CD8-positive, alpha-beta T cell (primary cell): ENCODE measurements at regions of chr11 and their contacts with region 1.

Region 1: GRCh38 chr11:14358729-14359439 is at the start of gene RRAS2:
- DNase-seq: peak; percentile 58 to 90 (median 80)
- ATAC-seq: peak; percentile 94
- H3K4me3 ChIP-seq: peak within 1 kb of the TSS; percentile 66 to 70
- H3K4me3 Mint-ChIP-seq: peak within 1 kb of the TSS; percentile 88
- H3K27ac ChIP-seq: peak within 1 kb of the TSS; percentile 19 to 64
- H3K27ac Mint-ChIP-seq: peak within 1 kb of the TSS; percentile 83
- H3K4me1 ChIP-seq: peaks cover 17% of the 10 kb centered on the region
- H3K4me1 Mint-ChIP-seq: peaks cover 35% of the 10 kb centered on the region
- H3K27me3 ChIP-seq: no peaks in the 10 kb centered on the region
- H3K27me3 Mint-ChIP-seq: no peaks in the 10 kb centered on the region
- CTCF ChIP-seq: no peak
- total RNA-seq, gene RRAS2: 38.5 to 40.6 TPM

Region 2: DNA sequence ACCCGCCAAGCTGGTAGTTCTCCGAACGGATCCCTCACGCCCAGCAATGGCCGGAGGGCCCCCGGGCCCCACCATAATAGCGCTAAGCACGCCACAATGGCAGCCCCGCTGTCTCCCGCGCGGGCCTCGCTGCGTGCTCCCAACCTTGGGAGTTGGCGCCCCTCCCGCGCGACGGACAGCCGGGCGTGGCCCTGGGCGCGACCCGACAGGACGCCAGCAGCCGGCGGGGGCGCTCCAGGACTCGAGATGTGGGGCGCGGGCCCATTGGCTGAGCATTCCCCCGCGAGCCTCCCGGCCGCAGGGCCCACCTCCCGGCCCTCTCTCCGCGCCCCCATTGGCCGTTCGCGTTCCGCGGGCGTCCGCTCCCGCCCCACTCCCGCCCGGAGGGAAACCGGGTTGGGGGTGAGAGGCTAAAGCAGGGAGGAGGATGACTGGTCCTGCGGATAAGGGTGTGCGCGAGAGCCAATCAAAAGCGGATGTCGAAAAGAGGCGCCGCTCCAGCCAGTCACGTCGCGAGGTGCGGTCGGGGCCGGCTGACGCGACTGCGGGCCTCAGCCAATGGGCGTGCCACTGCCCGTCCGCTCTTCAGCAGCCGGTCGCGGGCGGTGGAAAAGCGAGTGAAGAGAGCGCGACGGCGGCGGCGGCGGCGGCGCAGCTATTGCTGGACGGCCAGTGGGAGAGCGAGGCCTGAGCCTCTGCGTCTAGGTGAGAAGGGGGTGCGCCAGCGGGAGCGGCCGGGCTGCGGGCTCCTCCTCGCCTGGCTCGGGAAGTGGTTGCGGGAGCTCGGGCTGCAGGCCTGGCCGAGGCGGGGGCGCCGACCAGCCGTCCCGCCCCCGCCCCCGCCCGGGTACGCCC is 690.6 kb before region 1 on chr11 and contains the start of gene FAR1:
- CTCF ChIA-PET with region 1: no interaction called
- POLR2A ChIA-PET with region 1: no interaction called
- intact Hi-C with region 1: loop called (anchors 5 to 10 kb)
- DNase-seq: peak; percentile 92 to 98 (median 95)
- ATAC-seq: peak; percentile 89
- H3K4me3 ChIP-seq: peak within 1 kb of the TSS; percentile 76 to 81
- H3K4me3 Mint-ChIP-seq: peak within 1 kb of the TSS; percentile 98
- H3K27ac ChIP-seq: peak within 1 kb of the TSS; percentile 66 to 69
- H3K27ac Mint-ChIP-seq: peak within 1 kb of the TSS; percentile 96
- H3K4me1 ChIP-seq: peaks cover 14% of the 10 kb centered on the region
- H3K4me1 Mint-ChIP-seq: peaks cover 45% of the 10 kb centered on the region
- H3K27me3 ChIP-seq: no peaks in the 10 kb centered on the region
- H3K27me3 Mint-ChIP-seq: peaks cover 5% of the 10 kb centered on the region
- CTCF ChIP-seq: peak; percentile 70
- total RNA-seq, gene FAR1: 29.8 to 34.0 TPM

Region 3: GRCh38 chr11:14308114-14308896 is 50.6 kb before region 1 on chr11:
- CTCF ChIA-PET with region 1: interaction called, 3 read pairs
- POLR2A ChIA-PET with region 1: interaction called, 3 read pairs
- intact Hi-C with region 1: loop called (anchors 1 to 10 kb)
- DNase-seq: peak in 2 of 9 experiments; percentile 53 to 67
- ATAC-seq: peak; percentile 84
- H3K4me3 ChIP-seq: no peak overlapping the region
- H3K4me3 Mint-ChIP-seq: no peak overlapping the region
- H3K27ac ChIP-seq: peak overlapping the region in 1 of 2 experiments; percentile 23
- H3K27ac Mint-ChIP-seq: no peak overlapping the region
- H3K4me1 ChIP-seq: peaks cover 6% of the 10 kb centered on the region
- H3K4me1 Mint-ChIP-seq: peaks cover 31% of the 10 kb centered on the region
- H3K27me3 ChIP-seq: no peaks in the 10 kb centered on the region
- H3K27me3 Mint-ChIP-seq: no peaks in the 10 kb centered on the region
- CTCF ChIP-seq: peak; percentile 59

Region 4: GRCh38 chr11:14380947-14381561 is 22.2 kb after region 1 on chr11:
- CTCF ChIA-PET with region 1: no interaction called
- POLR2A ChIA-PET with region 1: interaction called, 3 read pairs
- intact Hi-C with region 1: loop called in 1 of 2 experiments (anchors 2 kb)
- DNase-seq: peak; percentile 24 to 74 (median 52)
- ATAC-seq: peak; percentile 90
- H3K4me3 ChIP-seq: peak overlapping the region; percentile 47 to 50
- H3K4me3 Mint-ChIP-seq: peak overlapping the region; percentile 82
- H3K27ac ChIP-seq: peak overlapping the region in 1 of 2 experiments; percentile 17
- H3K27ac Mint-ChIP-seq: no peak overlapping the region
- H3K4me1 ChIP-seq: no peaks in the 10 kb centered on the region
- H3K4me1 Mint-ChIP-seq: peaks cover 4% of the 10 kb centered on the region
- H3K27me3 ChIP-seq: peaks cover 0 to 4% of the 10 kb centered on the region in 2 experiments
- H3K27me3 Mint-ChIP-seq: peaks cover 10% of the 10 kb centered on the region
- CTCF ChIP-seq: no peak

Region 5: GRCh38 chr11:14454861-14455632 is 96.2 kb after region 1 on chr11:
- CTCF ChIA-PET with region 1: interaction called, 4 read pairs
- POLR2A ChIA-PET with region 1: no interaction called
- intact Hi-C with region 1: loop called (anchors 2 to 5 kb)
- DNase-seq: peak in 2 of 9 experiments; percentile 50 to 61
- ATAC-seq: peak; percentile 52
- H3K4me3 ChIP-seq: no peak overlapping the region
- H3K4me3 Mint-ChIP-seq: no peak overlapping the region
- H3K27ac ChIP-seq: no peak overlapping the region
- H3K27ac Mint-ChIP-seq: no peak overlapping the region
- H3K4me1 ChIP-seq: no peaks in the 10 kb centered on the region
- H3K4me1 Mint-ChIP-seq: no peaks in the 10 kb centered on the region
- H3K27me3 ChIP-seq: no peaks in the 10 kb centered on the region
- H3K27me3 Mint-ChIP-seq: no peaks in the 10 kb centered on the region
- CTCF ChIP-seq: peak; percentile 75

Region 6: DNA sequence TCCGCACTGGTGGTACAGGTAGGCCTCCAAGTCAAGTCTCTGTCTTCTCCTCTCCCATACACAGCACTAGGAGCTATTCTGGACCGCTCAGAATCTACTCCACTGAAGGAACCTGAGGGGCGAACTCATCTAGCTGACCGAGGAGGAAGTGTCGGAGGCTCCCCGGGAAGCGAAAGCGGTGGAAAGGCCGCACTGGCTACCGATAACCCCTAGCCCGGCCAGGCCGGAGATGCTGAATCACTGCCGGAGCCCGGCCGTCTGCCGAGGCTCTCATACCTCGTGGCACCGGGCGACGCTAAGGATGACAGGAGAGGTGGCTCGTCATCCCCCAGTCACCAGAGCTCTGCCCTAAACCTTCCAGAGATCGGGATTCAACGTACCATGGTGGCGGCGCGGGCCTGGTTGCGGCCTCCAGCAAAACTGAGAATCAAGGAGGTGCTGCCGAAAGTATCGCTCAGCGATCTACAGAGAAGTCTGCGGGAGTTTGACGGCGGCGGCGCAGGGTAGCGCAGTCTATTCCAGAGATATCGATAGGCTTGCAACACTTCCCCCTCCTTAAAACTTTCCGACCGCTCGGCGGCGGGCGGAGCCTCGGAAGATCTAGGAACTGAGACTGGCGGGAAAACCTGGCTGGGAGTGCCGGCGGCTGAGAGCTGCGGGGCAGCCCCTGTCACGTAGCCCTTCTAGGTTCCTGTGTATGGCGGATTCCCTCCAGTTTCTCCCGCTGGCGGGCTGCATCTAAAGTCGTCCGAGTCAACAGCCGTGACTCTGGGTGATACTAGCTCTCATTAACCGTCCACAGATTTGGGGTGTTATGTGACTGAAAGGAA is 161.2 kb after region 1 on chr11 and contains the start of gene PSMA1:
- CTCF ChIA-PET with region 1: no interaction called
- POLR2A ChIA-PET with region 1: no interaction called
- intact Hi-C with region 1: loop called in 1 of 2 experiments (anchors 1 kb)
- DNase-seq: peak; percentile 74 to 95 (median 90)
- ATAC-seq: peak; percentile 90
- H3K4me3 ChIP-seq: peak within 1 kb of the TSS; percentile 82 to 84
- H3K4me3 Mint-ChIP-seq: peak within 1 kb of the TSS; percentile 98
- H3K27ac ChIP-seq: peak within 1 kb of the TSS; percentile 82 to 87
- H3K27ac Mint-ChIP-seq: peak within 1 kb of the TSS; percentile 97
- H3K4me1 ChIP-seq: peaks cover 19% of the 10 kb centered on the region
- H3K4me1 Mint-ChIP-seq: peaks cover 32% of the 10 kb centered on the region
- H3K27me3 ChIP-seq: no peaks in the 10 kb centered on the region
- H3K27me3 Mint-ChIP-seq: no peaks in the 10 kb centered on the region
- CTCF ChIP-seq: no peak
- total RNA-seq, gene PSMA1: 177 to 193 TPM

Region 7: DNA sequence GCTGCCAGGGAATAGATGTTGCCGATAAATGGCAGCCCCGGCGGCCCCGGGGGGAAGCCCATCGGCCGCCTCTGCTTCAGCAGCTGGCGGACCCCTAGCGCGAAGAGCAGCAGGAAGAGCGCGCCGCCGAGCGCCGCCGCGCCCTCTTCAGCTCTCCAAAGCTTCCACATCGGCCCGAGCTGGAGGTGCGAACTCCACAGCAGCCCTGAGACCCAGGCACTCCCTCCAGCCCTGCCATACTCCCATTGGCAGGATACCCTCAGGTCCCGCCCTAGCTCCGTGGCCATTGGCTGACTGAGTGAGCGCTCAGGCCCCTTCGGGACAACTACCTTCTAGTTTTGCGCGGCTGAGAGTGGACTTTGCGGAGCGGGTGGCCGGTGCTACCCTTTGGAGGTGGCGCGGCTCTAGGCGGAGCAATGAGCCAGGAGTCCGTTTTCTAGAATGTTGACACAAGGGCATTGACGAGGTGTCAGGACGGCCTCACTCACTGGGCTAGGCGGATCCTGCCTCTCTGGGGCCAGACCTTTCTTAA is 533.2 kb after region 1 on chr11 and contains the start of gene CYP2R1:
- CTCF ChIA-PET with region 1: no interaction called
- POLR2A ChIA-PET with region 1: no interaction called
- intact Hi-C with region 1: loop called (anchors 5 kb)
- DNase-seq: peak; percentile 81 to 95 (median 89)
- ATAC-seq: peak; percentile 74
- H3K4me3 ChIP-seq: peak within 1 kb of the TSS; percentile 68 to 75
- H3K4me3 Mint-ChIP-seq: peak within 1 kb of the TSS; percentile 88
- H3K27ac ChIP-seq: peak within 1 kb of the TSS; percentile 49 to 79
- H3K27ac Mint-ChIP-seq: peak within 1 kb of the TSS; percentile 93
- H3K4me1 ChIP-seq: peaks cover 10% of the 10 kb centered on the region
- H3K4me1 Mint-ChIP-seq: peaks cover 42% of the 10 kb centered on the region
- H3K27me3 ChIP-seq: no peaks in the 10 kb centered on the region
- H3K27me3 Mint-ChIP-seq: no peaks in the 10 kb centered on the region
- CTCF ChIP-seq: no peak
- total RNA-seq, gene CYP2R1: 10.7 to 12.6 TPM